Cardiac septum (tissue), 1 donor: ENCODE measurements at regions of chr12 and their contacts with region 1.

Region 1: DNA sequence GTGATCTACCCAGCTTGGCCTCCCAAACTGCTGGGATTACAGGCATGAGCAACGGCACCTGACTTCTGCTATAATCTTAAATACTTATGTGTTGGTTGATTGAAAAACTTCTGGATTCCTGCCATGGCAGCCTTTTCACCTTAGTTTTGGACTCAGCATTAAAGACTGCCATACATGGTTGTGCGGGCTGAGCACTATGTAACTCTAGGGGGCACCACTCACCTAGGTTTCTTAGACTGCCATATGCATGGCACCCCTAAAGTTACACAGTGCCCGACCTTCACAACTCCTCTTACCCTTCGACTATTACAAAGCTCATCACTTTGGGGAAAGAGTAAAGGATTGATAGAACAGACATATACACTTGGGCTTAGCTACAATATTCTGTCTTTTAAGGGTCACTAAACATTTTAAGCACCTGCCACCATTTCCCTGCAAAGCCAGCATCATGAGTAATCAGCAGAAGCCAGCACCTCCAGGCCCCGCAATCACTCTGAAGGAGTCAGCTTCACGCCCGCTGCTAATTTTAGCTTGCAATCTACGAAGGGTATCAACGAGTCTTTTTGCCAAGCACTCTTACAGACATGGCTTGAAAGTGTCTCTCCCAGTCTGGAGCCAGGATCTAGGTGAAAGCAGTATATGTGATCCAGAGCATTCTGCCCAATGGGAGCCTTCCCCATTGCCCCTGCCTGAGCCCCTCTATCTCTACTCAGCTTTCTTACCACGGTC is 59.8 kb downstream of the SUDS3 start:
- DNase-seq: no peak

Region 2: DNA sequence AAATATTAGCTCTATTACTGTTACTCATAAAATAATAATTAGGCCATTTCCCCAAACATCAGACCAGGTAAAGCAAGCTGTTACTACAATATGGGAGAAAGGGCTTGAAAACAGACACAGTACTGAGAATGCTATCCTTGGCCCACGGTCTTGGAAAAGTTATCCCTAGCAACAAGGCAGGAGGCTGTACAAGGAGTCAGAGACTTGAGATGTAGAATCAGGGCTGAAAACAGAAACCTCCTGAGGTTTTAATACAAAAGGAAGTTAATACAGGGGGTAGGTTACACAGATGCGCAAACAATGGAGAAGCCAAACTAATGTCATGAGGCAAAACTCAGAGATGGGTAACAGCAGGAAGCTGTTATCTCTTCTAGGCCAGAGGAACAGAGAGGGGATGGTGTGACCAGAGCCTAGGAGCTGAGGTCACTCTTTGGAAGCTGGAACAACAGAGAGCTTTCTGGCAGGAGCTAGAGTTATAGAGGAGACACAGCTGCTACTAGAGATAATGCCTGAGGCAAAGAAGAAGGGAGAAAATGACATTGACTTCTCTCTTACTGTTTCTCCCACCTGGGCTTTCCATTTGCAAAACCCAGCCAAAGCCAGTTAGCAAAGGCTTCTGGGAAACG is 189.0 kb after region 1 on chr12:
- intact Hi-C with region 1: loop called (anchors 5 kb)
- DNase-seq: no peak